Gastrocnemius medialis (tissue), 4 donors: ENCODE measurements at regions of chr1 and their contacts with region 1.

Region 1: DNA sequence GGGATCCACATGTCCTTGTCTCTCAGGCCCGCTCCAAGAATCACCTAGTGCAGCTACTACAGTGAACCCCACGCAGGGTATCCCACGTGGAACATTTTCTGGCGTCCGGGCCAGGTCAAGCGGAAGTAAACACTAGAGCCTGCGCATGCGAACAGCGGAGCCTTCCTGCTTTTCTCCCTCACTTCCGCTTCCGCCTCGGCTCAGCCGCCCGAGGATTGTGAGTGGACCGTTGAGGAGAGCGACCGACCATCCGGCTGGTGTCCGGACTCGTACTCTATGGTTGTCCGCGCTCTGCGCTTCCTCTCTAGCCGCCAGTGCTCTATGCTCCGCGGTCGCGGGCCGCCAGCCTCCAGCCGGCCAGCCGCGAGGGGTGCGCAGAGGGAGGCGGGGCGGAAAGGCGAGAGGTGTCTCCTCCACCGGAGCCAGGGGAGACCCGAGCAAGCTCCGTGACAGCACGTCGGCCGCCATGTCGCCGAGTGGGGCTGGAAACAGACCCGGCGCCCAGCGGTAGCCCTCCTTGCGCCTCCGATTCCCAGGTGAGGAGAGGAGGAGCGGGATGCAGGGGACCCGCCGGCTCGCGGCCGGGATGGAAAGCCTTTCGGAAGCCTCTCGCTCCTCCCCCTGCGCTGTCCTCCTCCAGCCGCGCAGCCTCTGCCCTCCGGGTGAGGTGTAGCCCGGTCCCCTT is at the starts of genes CNST and TFB2M:
- DNase-seq: peak; percentile 98
- ATAC-seq: peak; percentile 91
- H3K4me3 ChIP-seq: peak within 1 kb of the TSS; percentile 88 to 100 (median 95)
- H3K27ac ChIP-seq: peak within 1 kb of the TSS; percentile 90 to 99 (median 96)
- H3K4me1 ChIP-seq: peaks cover 46 to 56% of the 10 kb centered on the region in 2 donors
- H3K27me3 ChIP-seq: no peaks in the 10 kb centered on the region
- CTCF ChIP-seq: peak in 1 of 5 experiments; percentile 3
- POLR2A ChIP-seq: peak; percentile 93 to 95
- total RNA-seq, gene CNST: 62.7 to 105 (median 81.5) TPM
- total RNA-seq, gene TFB2M: 18.9 to 33.1 (median 21.2) TPM

Region 2: GRCh38 chr1:244970661-244971551 is 1595.4 kb before region 1 on chr1:
- in situ Hi-C with region 1: no loop called
- intact Hi-C with region 1: loop called (anchors 5 kb)
- DNase-seq: peak; percentile 93 to 97
- ATAC-seq: peak; percentile 78 to 83
- H3K4me3 ChIP-seq: peak overlapping the region; percentile 67 to 84 (median 79)
- H3K27ac ChIP-seq: peak overlapping the region; percentile 98 to 100 (median 98)
- H3K4me1 ChIP-seq: peaks cover 20 to 22% of the 10 kb centered on the region in 2 donors
- H3K27me3 ChIP-seq: no peaks in the 10 kb centered on the region
- CTCF ChIP-seq: peak; percentile 29 to 75 (median 63)
- POLR2A ChIP-seq: peak; percentile 73 to 80

Region 3: DNA sequence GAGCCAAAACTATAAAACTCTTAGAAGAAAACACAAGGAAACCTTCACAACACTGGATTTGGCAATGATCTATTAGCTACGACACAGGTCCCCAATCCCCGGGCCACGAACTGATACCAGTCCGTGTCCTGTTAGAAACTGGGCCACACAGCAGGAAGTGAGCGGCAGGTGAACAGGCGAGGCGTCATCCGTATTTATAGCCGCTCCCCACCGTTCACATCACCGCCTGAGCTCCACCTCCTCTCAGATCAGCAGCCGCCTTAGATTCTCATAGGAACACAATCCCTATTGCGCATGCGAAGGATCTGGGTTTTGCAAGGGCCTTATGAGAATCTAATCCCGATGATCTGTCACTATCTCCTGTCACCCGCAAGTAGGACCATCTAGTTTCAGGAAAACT is 12.1 kb before region 1 on chr1:
- in situ Hi-C with region 1: no loop called
- intact Hi-C with region 1: no loop called
- DNase-seq: no peak
- ATAC-seq: no peak
- H3K4me3 ChIP-seq: no peak overlapping the region
- H3K27ac ChIP-seq: peak overlapping the region in 2 of 4 donors; percentile 1 to 22
- H3K4me1 ChIP-seq: no peaks in the 10 kb centered on the region
- H3K27me3 ChIP-seq: no peaks in the 10 kb centered on the region
- CTCF ChIP-seq: no peak
- POLR2A ChIP-seq: peak in 1 of 2 donors; percentile 13

Region 4: GRCh38 chr1:246641394-246641793 is 75.1 kb after region 1 on chr1:
- in situ Hi-C with region 1: no loop called
- intact Hi-C with region 1: loop called (anchors 5 kb)
- DNase-seq: no peak
- ATAC-seq: peak; percentile 77 to 82
- H3K4me3 ChIP-seq: peak overlapping the region in 3 of 4 donors; percentile 22 to 38 (median 22)
- H3K27ac ChIP-seq: peak overlapping the region; percentile 72 to 83 (median 78)
- H3K4me1 ChIP-seq: peaks cover 18 to 34% of the 10 kb centered on the region in 2 donors
- H3K27me3 ChIP-seq: no peaks in the 10 kb centered on the region
- CTCF ChIP-seq: no peak
- POLR2A ChIP-seq: no peak

Region 5: DNA sequence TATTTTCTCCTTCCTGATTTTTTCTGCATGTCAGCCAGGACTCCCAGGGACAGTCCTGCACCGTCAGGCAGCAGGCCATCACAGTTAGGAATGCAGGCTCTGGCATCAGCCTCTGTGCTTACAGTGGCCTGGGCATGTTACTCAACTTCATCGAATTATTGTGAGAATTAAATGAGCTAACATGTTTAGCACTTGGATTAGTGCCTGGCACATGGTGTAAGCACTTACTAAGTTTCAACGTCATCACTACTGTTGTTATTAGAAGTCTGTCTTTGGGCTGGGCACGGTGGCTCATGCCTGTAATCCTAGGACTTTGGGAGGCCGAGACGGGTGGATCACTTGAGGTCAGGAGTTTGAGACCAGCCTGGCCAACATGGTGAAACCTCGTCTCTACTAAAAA is 203.0 kb after region 1 on chr1:
- in situ Hi-C with region 1: no loop called
- intact Hi-C with region 1: loop called (anchors 10 kb)
- DNase-seq: peak; percentile 67 to 82
- ATAC-seq: peak; percentile 98 to 99
- H3K4me3 ChIP-seq: no peak overlapping the region
- H3K27ac ChIP-seq: peak overlapping the region; percentile 67 to 77 (median 71)
- H3K4me1 ChIP-seq: no peaks in the 10 kb centered on the region
- H3K27me3 ChIP-seq: no peaks in the 10 kb centered on the region
- CTCF ChIP-seq: no peak
- POLR2A ChIP-seq: no peak

Region 6: DNA sequence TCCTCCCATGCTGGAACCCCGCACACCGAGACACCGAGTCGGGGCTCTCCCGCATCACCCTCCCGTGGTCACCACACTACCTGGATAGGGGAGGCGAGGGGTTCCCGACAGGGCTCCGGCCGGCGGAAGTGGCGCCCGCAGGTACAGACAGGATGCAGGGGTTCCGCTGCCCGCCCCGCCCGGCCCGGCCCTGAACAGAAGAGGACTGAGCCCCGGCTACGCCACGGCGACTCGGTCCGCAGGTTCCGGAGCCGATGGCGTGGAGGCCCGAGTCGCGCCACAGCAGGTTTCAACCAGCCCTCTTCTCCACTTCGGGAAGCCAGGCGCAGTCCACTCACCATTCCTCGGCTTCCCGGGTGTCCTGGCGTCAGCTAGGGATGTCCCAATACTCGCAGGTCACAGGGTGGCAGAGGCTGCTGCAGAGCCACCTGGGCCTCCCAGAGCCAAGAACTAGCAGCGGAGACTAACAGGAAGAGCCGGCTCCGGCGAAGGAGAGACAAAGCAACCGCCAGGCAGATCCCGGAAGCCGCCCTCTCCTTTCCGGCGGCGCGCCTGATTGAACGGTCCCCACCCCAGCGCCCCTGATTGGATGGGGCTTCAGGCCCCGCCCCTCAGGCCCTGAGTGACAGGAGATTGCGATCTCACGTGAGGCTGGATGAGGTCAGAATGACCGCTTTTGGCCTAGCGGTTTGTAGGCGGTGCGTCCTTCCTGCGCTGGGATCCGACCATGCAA is 537.8 kb after region 1 on chr1 and contains the start of gene ZNF669:
- in situ Hi-C with region 1: no loop called
- intact Hi-C with region 1: loop called (anchors 10 kb)
- DNase-seq: peak; percentile 97 to 98
- ATAC-seq: peak; percentile 99
- H3K4me3 ChIP-seq: peak within 1 kb of the TSS; percentile 73 to 95 (median 90)
- H3K27ac ChIP-seq: peak within 1 kb of the TSS; percentile 92 to 94 (median 94)
- H3K4me1 ChIP-seq: peaks cover 12 to 15% of the 10 kb centered on the region in 2 donors
- H3K27me3 ChIP-seq: no peaks in the 10 kb centered on the region
- CTCF ChIP-seq: no peak
- POLR2A ChIP-seq: peak; percentile 73 to 77
- total RNA-seq, gene ZNF669: 1.3 to 7.3 (median 2.7) TPM